ENCODE measurements at regions of chr20 and their contacts with region 1.

Region 1: DNA sequence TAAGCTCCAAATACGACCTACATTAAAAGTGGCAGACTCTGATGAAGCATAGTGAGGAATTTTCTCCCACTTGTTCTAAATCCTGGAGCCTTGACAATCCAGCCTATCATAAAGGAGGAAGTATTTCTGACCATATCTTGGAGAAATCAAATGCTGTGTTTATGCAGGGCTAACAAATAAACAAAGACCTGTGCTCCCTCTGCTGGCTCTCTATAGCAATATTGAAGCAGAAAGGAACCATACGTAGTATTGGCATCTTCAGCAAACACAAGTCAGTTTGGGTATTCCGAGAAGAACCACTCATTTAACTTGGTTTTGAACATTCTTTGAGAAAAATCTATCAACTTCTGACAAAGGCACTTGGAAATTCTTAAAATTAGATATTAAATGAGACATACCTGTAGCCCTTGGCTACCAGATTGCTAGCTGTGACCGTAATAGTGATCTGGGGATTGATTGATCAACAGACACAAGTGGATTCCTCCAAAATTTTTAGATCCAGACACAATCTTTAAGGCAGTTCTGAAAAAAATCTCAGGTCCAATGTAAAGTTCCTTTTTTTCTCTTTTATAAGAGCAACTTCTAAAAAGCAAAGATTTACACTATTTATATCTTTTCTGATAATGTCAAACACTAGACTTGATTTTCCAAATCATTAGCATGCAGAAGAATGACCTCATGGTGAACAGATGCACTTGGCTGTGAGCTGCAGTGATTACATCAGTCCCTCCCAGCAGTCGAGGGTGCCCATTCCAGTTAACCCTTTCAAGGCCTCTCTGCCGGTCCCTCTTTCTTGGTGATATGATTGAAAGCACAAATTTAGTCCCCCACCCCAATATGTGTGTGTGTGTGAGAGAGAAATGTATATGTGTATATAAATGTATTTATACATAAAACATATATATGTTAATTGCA is 40.2 kb downstream of the INSM1 start:
- DNase-seq: no peak
- H3K4me3 ChIP-seq: no peak overlapping the region
- H3K27ac ChIP-seq: no peak overlapping the region
- H3K4me1 ChIP-seq: peaks cover 0 to 17% (median 11%) of the 10 kb centered on the region in 4 experiments; a peak in 4 of 7 replicates
- H3K27me3 ChIP-seq: no peaks in the 10 kb centered on the region
- CTCF ChIP-seq: peak in 2 of 3 experiments; percentile 28 to 50; a peak in 2 of 4 replicates
- EP300 ChIP-seq: no peak
- POLR2A ChIP-seq: no peak
- RAD21 ChIP-seq: peak; percentile 53 to 62

Region 2: GRCh38 chr20:20248620-20249200 is 159.4 kb before region 1 on chr20:
- CTCF ChIA-PET with region 1: no interaction called
- POLR2A ChIA-PET with region 1: no interaction called
- DNase-seq: no peak
- H3K4me3 ChIP-seq: no peak overlapping the region
- H3K27ac ChIP-seq: no peak overlapping the region
- H3K4me1 ChIP-seq: no peaks in the 10 kb centered on the region
- H3K27me3 ChIP-seq: peaks cover 0 to 4% (median 0%) of the 10 kb centered on the region in 4 experiments; a peak in 1 of 7 replicates
- CTCF ChIP-seq: no peak
- EP300 ChIP-seq: no peak
- POLR2A ChIP-seq: no peak
- RAD21 ChIP-seq: no peak

Region 3: DNA sequence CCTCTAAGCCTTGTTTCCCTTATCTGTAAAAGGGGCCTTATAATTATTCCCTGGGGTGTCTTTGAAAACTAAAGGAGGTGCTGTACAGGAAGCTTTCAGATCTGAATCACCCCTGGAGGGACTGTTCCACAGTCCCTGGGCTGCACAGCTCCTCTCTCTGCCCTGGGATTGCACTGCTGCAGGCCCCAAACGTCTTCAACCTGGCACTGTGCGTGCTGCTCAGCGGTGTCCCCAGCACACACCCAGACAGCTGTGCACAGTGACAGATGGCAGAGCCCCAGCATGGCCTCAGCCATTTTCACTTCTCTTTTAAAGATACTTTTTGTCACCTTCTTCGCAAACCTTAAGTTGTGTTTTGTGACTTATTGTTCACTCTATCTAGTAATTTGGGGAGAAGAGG is 91.0 kb before region 1 on chr20:
- CTCF ChIA-PET with region 1: no interaction called
- POLR2A ChIA-PET with region 1: no interaction called
- DNase-seq: no peak
- H3K4me3 ChIP-seq: no peak overlapping the region
- H3K27ac ChIP-seq: no peak overlapping the region
- H3K4me1 ChIP-seq: no peaks in the 10 kb centered on the region
- H3K27me3 ChIP-seq: no peaks in the 10 kb centered on the region
- CTCF ChIP-seq: no peak
- EP300 ChIP-seq: no peak
- POLR2A ChIP-seq: no peak
- RAD21 ChIP-seq: no peak

Region 4: GRCh38 chr20:20360464-20360863 is 47.7 kb before region 1 on chr20:
- CTCF ChIA-PET with region 1: interaction called, 10 read pairs
- POLR2A ChIA-PET with region 1: no interaction called
- DNase-seq: no peak
- H3K4me3 ChIP-seq: no peak overlapping the region
- H3K27ac ChIP-seq: no peak overlapping the region
- H3K4me1 ChIP-seq: peaks cover 0 to 9% (median 4%) of the 10 kb centered on the region in 4 experiments; a peak in 5 of 7 replicates
- H3K27me3 ChIP-seq: peaks cover 22 to 51% (median 42%) of the 10 kb centered on the region in 4 experiments
- CTCF ChIP-seq: peak; percentile 62 to 92 (median 78)
- EP300 ChIP-seq: no peak
- POLR2A ChIP-seq: no peak
- RAD21 ChIP-seq: peak; percentile 68 to 78

Region 5: GRCh38 chr20:20373091-20373571 is 35.0 kb before region 1 on chr20:
- CTCF ChIA-PET with region 1: interaction called, 11 read pairs
- POLR2A ChIA-PET with region 1: interaction called, 6 read pairs
- DNase-seq: no peak
- H3K4me3 ChIP-seq: no peak overlapping the region
- H3K27ac ChIP-seq: no peak overlapping the region
- H3K4me1 ChIP-seq: peaks cover 9 to 33% (median 15%) of the 10 kb centered on the region in 4 experiments
- H3K27me3 ChIP-seq: peaks cover 18 to 55% (median 39%) of the 10 kb centered on the region in 4 experiments
- CTCF ChIP-seq: no peak
- EP300 ChIP-seq: no peak
- POLR2A ChIP-seq: no peak
- RAD21 ChIP-seq: no peak

Region 6: GRCh38 chr20:20393207-20394120 is 14.7 kb before region 1 on chr20:
- CTCF ChIA-PET with region 1: interaction called, 17 read pairs
- POLR2A ChIA-PET with region 1: interaction called, 3 read pairs
- DNase-seq: no peak
- H3K4me3 ChIP-seq: no peak overlapping the region
- H3K27ac ChIP-seq: no peak overlapping the region
- H3K4me1 ChIP-seq: peaks cover 0 to 16% (median 12%) of the 10 kb centered on the region in 4 experiments; a peak in 6 of 7 replicates
- H3K27me3 ChIP-seq: no peaks in the 10 kb centered on the region
- CTCF ChIP-seq: no peak
- EP300 ChIP-seq: no peak
- POLR2A ChIP-seq: no peak
- RAD21 ChIP-seq: no peak

Region 7: DNA sequence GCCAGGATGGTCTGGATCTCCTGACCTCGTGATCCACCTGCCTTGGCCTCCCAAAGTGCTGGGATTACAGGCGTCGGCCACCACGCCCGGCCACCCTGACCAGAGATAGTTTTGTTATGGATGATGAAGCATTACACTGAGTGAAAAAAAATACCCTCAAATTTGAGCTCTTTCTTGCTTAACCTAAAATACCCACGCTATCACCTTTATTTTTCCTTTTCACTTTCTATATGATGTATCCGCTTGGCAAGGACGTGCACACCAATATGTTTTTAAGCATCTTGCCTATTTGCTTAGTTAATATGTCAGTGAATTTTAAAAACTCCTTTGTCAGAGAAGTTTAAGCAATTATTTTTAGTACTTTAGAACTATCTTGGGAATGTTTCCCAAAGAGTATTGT is 110.1 kb after region 1 on chr20:
- CTCF ChIA-PET with region 1: no interaction called
- POLR2A ChIA-PET with region 1: no interaction called
- DNase-seq: no peak
- H3K4me3 ChIP-seq: no peak overlapping the region
- H3K27ac ChIP-seq: no peak overlapping the region
- H3K4me1 ChIP-seq: no peaks in the 10 kb centered on the region
- H3K27me3 ChIP-seq: no peaks in the 10 kb centered on the region
- CTCF ChIP-seq: no peak
- EP300 ChIP-seq: no peak
- POLR2A ChIP-seq: no peak
- RAD21 ChIP-seq: no peak

Region 8: GRCh38 chr20:20530428-20531151 is 122.4 kb after region 1 on chr20:
- CTCF ChIA-PET with region 1: no interaction called
- POLR2A ChIA-PET with region 1: no interaction called
- DNase-seq: no peak
- H3K4me3 ChIP-seq: no peak overlapping the region
- H3K27ac ChIP-seq: no peak overlapping the region
- H3K4me1 ChIP-seq: peaks cover 0 to 5% (median 2%) of the 10 kb centered on the region in 4 experiments; a peak in 2 of 7 replicates
- H3K27me3 ChIP-seq: no peaks in the 10 kb centered on the region
- CTCF ChIP-seq: no peak
- EP300 ChIP-seq: no peak
- POLR2A ChIP-seq: no peak
- RAD21 ChIP-seq: no peak